ENCODE measurements at regions of chr4 and their contacts with region 1.

Region 1: DNA sequence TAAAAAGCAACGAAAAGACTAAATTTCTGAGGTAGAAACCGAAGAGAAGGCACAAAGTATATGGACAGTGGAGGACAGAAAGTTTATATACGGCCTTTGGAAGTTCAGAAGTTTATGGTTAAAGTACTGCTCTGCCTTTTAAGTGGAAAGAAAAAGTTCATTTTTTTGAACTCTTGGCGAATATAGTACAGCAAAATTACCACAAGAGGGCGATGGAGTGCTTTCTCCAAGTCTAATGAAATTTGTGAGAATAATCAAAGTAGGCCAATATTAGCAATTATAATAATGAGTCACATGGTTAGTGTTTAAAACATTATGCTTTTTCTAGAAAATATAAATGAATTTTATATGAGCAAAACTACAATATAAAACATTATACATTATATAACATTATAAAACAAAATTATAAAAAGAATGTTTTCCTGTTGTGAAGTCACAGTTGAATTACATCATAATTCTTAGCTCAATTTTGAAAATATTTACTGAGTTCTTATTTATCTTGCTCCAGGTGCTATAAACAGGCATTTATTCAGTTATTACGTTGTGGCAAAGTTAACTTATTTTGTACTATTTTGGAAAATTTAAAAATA is 136.2 kb upstream of the BMPR1B start:
- DNase-seq: peak; percentile 21 to 57
- ATAC-seq: peak in 1 of 2 experiments; percentile 52; a peak in 2 of 6 replicates
- H3K4me3 ChIP-seq: no peak overlapping the region
- H3K27ac ChIP-seq: peak overlapping the region; percentile 63 to 78
- H3K4me1 ChIP-seq: peaks cover 44% of the 10 kb centered on the region
- CTCF ChIP-seq: peak; percentile 82
- EP300 ChIP-seq: no peak
- POLR2A ChIP-seq: no peak
- RAD21 ChIP-seq: peak; percentile 87 to 90

Region 2: DNA sequence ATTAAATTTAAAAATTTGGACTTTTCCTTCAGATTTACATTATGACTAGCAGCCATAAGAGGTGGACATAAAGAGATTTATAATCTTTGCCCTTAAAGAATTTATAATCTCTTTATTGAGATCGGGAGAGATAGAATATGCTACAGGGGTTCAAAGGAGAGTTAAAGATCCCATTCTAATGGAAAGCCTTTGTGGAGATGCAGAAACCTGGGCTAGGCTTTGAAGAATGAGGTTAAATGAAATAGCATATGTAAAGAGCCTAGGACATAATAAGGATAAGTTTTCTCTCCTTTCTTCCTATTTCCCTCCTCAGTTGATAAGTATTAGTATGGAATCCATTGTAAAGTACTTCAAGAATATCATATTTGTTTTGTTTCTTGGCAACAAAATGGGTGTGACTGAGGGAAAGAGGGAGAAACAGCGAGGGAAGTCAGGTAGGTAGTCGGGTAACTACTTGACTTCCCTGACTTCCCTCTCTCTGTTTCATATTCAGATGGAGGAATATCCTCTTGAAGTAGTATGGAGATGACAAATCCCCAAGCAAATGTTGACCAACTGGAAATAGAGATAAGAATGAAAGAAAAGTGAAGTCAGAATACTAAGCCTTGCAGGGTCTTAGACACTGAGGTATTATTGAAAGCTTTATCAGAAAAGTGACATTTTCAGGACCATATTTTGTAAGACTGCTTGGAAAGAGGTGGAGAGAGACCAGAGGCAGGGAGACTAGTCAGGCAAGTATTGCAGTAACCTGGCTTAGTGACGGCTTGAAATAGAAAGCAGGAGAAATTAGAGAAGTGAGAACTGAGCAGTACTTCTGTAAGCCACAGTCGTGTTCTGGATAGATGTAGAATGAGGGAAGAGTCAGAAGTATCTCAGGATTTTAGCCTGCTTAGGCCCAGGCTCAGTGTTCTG is 86.9 kb before region 1 on chr4:
- CTCF ChIA-PET with region 1: no interaction called
- POLR2A ChIA-PET with region 1: no interaction called
- DNase-seq: no peak
- ATAC-seq: peak in 1 of 2 experiments; percentile 58; a peak in 3 of 6 replicates
- H3K4me3 ChIP-seq: no peak overlapping the region
- H3K27ac ChIP-seq: peak overlapping the region; percentile 2 to 35; a peak in 3 of 6 replicates
- H3K4me1 ChIP-seq: peaks cover 94% of the 10 kb centered on the region
- CTCF ChIP-seq: no peak
- EP300 ChIP-seq: no peak
- POLR2A ChIP-seq: no peak
- RAD21 ChIP-seq: no peak

Region 3: DNA sequence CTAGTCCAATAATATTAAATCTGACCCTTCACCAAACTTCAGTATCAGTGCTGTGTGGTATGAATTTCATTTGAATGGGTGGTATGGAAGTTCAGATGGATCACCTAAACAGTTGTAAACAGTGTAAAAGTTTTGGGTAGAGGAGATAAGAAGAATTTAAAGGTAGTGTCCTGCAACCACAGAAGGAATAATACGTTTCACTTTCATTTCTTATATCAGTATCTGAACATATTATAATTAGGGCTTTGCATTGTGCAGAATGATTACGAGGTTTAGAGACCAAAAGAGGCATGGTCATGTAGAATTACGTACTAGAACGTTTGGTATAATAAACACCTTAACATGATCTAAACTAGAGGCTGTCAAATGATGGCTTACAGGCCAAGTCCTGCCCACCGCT is 53.8 kb before region 1 on chr4:
- CTCF ChIA-PET with region 1: no interaction called
- POLR2A ChIA-PET with region 1: no interaction called
- DNase-seq: no peak
- ATAC-seq: no peak
- H3K4me3 ChIP-seq: no peak overlapping the region
- H3K27ac ChIP-seq: no peak overlapping the region
- H3K4me1 ChIP-seq: peaks cover 30% of the 10 kb centered on the region; the same call in 1 of the 3 replicates
- CTCF ChIP-seq: no peak
- EP300 ChIP-seq: no peak
- POLR2A ChIP-seq: no peak
- RAD21 ChIP-seq: no peak

Region 4: GRCh38 chr4:94732358-94732698 is 110.7 kb after region 1 on chr4:
- CTCF ChIA-PET with region 1: interaction called, 31 read pairs
- POLR2A ChIA-PET with region 1: no interaction called
- DNase-seq: peak in 1 of 2 experiments; percentile 56
- ATAC-seq: peak; percentile 52 to 82; a peak in 4 of 6 replicates
- H3K4me3 ChIP-seq: no peak overlapping the region
- H3K27ac ChIP-seq: peak overlapping the region; percentile 70 to 75
- H3K4me1 ChIP-seq: peaks cover 41% of the 10 kb centered on the region
- CTCF ChIP-seq: no peak
- EP300 ChIP-seq: no peak
- POLR2A ChIP-seq: no peak
- RAD21 ChIP-seq: peak in 1 of 2 experiments; percentile 35; a peak in 1 of 5 replicates